H1 (cell line): ENCODE measurements at regions of chr1 and their contacts with region 1.

Region 1: DNA sequence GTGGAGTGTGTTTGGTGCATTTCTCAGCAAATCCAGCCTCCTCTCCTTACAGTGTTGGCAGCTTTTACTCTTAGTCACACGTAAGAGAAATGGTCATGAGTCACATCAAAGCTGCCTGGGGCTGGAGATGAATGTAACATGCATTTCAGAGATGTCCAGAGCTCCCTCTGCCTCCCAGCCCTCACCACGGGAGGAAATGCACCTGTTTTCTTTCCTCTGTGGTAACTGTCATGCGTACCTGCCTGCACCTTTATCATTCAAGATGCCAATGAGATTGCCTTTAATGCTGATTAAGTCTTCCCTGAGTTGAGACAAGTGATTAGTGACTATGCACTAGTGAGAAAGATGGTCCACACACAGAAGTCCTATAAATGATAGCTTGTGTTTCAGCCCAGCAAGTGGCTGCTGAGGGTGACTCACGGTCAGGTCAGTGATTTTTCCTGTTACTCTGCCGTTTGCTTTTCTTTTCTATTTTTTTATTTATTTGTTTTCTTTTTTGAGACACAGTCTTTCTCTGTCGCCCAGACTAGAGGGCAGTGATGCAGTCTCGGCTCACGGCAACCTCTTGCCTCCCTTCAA is 277.3 kb upstream of the FMN2 start:
- DNase-seq: peak in 1 of 2 experiments; percentile 69
- H3K4me3 ChIP-seq: no peak overlapping the region
- H3K27ac ChIP-seq: no peak overlapping the region
- H3K4me1 ChIP-seq: peaks cover 0 to 27% (median 23%) of the 10 kb centered on the region in 4 experiments; a peak in 6 of 7 replicates
- H3K27me3 ChIP-seq: no peaks in the 10 kb centered on the region
- CTCF ChIP-seq: no peak
- EP300 ChIP-seq: peak in 1 of 2 experiments; percentile 33; a peak in 1 of 3 replicates
- POLR2A ChIP-seq: no peak
- RAD21 ChIP-seq: no peak

Region 2: DNA sequence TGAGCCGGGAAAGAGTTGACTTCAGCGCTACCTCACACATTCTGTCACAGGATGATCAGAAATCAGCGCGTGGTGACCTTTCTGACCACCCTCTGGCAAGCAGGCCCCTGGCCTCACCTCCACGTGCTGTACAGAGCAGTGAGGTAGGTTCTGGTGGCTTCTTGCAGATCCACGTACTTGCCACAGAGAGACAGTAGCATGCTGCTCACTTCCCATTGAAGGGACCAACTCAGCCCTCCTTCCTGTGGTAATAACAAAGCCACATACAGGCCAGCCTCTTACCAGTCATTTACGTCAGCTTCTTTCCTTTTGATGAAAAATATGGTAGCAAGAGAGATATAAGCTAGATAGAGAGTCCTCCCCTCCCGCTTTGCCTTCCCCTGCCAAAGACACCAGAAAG is 227.3 kb before region 1 on chr1:
- CTCF ChIA-PET with region 1: interaction called, 11 read pairs
- POLR2A ChIA-PET with region 1: no interaction called
- DNase-seq: no peak
- H3K4me3 ChIP-seq: no peak overlapping the region
- H3K27ac ChIP-seq: no peak overlapping the region
- H3K4me1 ChIP-seq: no peaks in the 10 kb centered on the region
- H3K27me3 ChIP-seq: no peaks in the 10 kb centered on the region
- CTCF ChIP-seq: peak in 1 of 3 experiments; percentile 41; a peak in 1 of 4 replicates
- EP300 ChIP-seq: no peak
- POLR2A ChIP-seq: no peak
- RAD21 ChIP-seq: peak; percentile 52 to 58

Region 3: DNA sequence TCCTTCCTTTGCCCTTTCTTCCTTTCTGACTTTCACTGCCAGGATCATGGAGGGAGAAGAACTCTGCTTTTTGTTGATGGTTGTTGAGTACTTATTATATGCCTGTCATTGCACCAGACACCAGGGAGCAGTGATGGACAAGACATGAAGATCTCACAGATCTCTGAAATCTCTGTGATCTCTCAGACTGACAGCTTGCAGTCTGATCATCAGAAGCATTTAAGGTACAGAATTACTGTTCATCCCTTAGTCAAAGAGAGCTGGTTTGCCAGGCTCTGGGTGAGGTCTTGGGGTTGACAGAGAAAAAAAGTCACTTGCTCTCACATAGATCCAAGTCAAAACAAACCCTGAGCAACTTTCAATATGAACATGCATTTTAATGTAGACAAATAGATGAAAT is 22.2 kb before region 1 on chr1:
- CTCF ChIA-PET with region 1: interaction called, 11 read pairs
- POLR2A ChIA-PET with region 1: no interaction called
- DNase-seq: no peak
- H3K4me3 ChIP-seq: no peak overlapping the region
- H3K27ac ChIP-seq: no peak overlapping the region
- H3K4me1 ChIP-seq: peaks cover 0 to 2% (median 0%) of the 10 kb centered on the region in 4 experiments; a peak in 1 of 7 replicates
- H3K27me3 ChIP-seq: no peaks in the 10 kb centered on the region
- CTCF ChIP-seq: no peak
- EP300 ChIP-seq: no peak
- POLR2A ChIP-seq: no peak
- RAD21 ChIP-seq: no peak

Region 4: GRCh38 chr1:239833723-239834122 is 19.3 kb after region 1 on chr1:
- CTCF ChIA-PET with region 1: interaction called, 10 read pairs
- POLR2A ChIA-PET with region 1: no interaction called
- DNase-seq: no peak
- H3K4me3 ChIP-seq: no peak overlapping the region
- H3K27ac ChIP-seq: no peak overlapping the region
- H3K4me1 ChIP-seq: peaks cover 0 to 5% (median 0%) of the 10 kb centered on the region in 4 experiments; a peak in 2 of 7 replicates
- H3K27me3 ChIP-seq: no peaks in the 10 kb centered on the region
- CTCF ChIP-seq: no peak
- EP300 ChIP-seq: no peak
- POLR2A ChIP-seq: no peak
- RAD21 ChIP-seq: no peak

Region 5: DNA sequence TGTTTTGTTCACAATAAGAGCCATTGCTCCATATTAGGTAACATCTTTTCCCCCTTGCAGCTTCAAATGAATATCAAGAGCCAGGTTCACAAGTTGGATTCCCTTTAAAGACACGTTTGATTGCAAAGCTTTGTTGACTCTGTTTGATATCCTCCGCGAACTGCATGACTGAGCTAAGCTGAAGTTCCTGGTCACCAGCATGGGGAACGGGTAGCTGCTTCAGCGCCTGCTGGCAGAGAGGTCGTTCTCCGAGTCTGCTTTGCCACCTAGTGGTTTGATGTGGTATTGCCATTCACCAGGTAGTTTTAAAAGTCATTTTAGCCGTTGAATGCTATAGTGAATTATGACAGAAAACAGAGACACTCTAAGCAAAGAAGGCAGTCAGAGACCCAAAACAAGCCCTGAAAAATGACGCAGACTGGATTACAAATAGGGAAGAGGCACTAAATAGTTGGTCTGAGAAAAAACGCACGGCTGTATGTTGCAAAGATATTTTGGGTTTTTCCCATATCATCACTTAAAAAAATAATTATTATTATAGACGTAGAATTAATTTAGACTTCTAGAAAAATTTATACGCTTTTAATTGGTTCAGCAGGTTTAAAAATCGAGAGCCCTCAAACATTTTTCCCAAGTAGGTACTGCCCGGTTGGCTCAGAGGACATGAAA is 83.8 kb after region 1 on chr1:
- CTCF ChIA-PET with region 1: interaction called, 17 read pairs
- POLR2A ChIA-PET with region 1: no interaction called
- DNase-seq: peak; percentile 53 to 83
- H3K4me3 ChIP-seq: peak overlapping the region in 1 of 4 experiments; percentile 32; a peak in 2 of 8 replicates
- H3K27ac ChIP-seq: no peak overlapping the region
- H3K4me1 ChIP-seq: 0 out of 7 replicates have a peak, but pooled peaks cover 0 to 2% (median 0%) of the 10 kb centered on the region in 4 experiments
- H3K27me3 ChIP-seq: no peaks in the 10 kb centered on the region
- CTCF ChIP-seq: peak; percentile 73 to 98 (median 94)
- EP300 ChIP-seq: no peak
- POLR2A ChIP-seq: no peak
- RAD21 ChIP-seq: peak; percentile 99 to 100